BJ (cell line): ENCODE measurements at regions of chr16 and their contacts with region 1.

Region 1: DNA sequence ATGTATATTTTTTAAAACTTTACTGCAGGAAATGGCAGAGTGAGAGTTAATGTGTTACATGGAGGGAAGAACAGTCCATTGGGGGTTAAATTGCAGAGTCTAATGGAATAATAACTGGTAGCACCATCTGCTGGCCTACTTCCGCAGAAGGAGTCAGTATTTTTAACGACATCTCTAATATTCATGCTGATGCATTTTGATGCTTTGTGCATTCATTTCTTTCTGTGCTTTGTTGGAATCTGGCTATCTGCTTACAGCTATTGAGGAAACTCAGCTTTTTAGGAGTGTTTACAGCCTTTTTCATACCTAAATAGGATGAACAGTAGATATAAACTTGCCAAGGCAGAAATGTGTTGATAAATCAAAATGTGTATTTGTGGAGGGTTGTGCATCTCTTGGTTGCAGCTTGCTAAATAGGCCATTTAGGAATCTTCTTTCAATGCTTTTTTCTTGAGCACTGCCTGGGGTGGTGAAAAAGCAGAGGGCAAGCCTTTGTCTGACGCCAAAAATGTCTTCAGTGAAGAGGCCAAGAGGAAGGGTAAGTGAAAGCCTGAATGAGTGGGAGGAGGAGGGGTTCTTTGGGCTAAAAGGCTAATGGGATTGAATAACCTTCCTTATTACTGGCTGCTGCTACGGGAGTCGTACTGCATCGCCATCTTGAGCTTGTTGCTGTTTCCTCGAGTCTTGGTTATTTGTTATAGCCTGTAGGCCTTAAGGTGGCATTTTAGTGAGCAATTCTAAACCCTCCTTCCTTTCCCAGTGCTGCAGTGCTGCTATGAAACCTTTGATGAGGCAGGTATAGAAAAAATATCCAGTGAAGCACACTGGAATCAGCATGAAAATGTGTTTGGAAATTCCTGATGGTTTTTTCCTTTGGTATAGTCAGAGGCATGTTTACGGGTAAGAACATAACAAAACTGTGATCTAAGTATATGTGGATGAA is 153.3 kb downstream of the CHD9 start:
- DNase-seq: peak; percentile 37
- H3K4me3 ChIP-seq: peak overlapping the region; percentile 38
- H3K27me3 ChIP-seq: no peaks in the 10 kb centered on the region
- CTCF ChIP-seq: peak; percentile 61

Region 2: DNA sequence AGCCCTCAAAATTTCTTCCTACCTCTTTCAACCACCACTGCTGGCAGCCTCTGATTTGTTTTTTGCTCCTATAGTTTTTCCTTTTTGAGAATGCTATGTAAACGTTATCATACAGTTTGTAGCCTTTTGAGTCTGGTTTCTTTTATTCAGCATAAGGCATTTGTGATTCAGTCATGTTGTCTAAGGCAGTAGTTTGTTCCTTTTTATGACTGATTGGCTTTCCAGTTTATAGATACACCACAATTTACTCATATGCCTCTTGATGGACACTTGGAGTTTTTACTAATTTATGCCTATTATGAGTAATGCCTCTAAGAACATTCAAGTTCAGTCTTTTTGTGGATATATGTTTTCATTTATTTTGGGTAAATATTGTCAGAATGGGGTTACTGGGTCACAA is 16.7 kb before region 1 on chr16:
- CTCF ChIA-PET with region 1: no interaction called
- POLR2A ChIA-PET with region 1: no interaction called
- DNase-seq: no peak
- H3K4me3 ChIP-seq: no peak overlapping the region
- H3K27me3 ChIP-seq: no peaks in the 10 kb centered on the region
- CTCF ChIP-seq: no peak

Region 3: DNA sequence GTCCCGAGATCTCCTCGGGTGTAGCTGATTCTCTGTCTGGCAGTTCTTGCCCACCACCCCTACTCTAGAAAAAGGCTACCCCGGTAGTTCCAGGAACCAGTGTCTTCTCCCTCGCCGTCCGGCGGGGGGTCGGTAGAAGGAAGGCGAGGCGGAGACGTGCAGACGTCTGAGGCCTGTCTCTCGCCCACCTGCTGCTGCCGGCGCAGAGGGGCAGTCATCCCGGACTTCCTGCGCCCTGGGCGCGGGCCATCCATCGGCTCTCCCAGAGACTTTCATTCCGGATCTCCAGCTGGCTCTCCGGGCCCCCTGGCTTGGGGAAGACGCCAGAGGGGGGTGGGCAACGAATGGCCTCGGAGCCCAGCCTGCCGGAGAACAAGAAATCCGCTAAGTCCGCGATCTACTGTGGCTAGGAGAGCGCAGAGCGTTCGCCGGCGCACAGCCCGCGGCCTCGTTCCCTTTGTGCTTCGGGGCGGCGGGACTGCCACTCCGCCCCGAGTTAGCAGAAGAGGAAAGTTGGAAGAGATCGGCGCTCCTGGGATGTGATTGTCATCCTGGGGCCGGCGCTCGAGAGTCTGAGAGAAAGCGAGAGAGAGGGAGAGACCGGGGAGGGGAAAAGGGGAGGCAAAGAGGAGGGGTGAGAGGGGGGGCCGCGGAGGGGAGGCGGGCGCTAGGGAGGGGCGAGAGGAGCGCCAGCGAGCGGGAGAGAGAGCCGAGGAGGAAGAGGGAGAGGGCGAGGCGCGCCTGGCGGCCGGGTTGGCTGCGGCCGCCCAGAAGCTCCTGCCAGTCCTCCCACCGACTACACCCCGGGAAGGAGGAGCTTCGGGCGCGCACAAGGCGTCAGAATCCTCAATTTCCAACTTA is 1722.2 kb after region 1 on chr16 and contains the start of gene IRX5:
- CTCF ChIA-PET with region 1: no interaction called
- POLR2A ChIA-PET with region 1: interaction called, 10 read pairs
- DNase-seq: peak; percentile 82
- H3K4me3 ChIP-seq: peak within 1 kb of the TSS; percentile 65
- H3K27me3 ChIP-seq: no peaks in the 10 kb centered on the region
- CTCF ChIP-seq: peak; percentile 18; the same call in 1 of the 2 replicates
- polyA plus RNA-seq, gene IRX5: 1.8 and 2.2 TPM in 2 replicates